Activated CD8-positive, alpha-beta T cell treated with anti-CD3 and anti-CD28 coated beads for 36 hours (primary cell): ENCODE measurements at regions of chr9 and their contacts with region 1.

Region 1: DNA sequence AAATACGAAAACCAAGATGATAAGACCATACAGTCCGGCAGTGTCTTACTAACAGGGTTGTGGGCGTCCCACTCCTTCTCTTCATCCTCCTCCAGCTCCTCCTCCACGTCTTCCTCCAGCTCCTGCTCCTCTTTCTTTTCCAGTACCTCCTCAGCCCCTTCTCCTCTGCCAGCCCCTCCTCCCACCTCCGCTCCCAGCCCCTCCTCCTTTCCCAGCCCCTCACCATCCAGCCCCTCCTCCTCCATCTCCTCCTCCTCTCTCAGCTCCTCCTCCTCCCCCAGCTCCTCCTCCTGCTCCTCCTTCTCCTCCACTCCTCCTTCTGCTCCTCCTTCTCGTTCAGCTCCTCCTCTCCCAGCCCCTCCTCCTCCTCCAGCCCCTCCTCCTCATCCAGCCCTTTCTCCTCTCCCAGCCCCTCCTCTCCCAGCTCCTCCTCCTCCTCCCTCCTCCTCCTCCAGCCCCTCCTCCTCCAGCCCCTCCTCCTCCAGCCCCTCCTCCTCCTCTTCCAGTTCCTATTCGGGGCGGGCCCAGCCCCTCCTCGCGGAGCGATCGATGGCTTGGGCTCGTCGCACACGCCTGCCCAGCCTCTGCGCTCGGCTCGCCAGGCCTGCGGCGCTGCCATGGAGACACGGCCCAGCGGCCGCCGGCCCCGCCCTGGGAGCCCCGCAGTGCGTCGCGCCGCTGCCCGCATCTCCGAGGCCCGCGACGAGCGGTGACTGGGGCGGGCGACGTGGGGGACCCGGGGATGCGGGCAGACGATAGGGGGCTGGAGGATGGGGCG is at the start of gene BRD3OS:
- DNase-seq: peak; percentile 95
- ATAC-seq: peak; percentile 95
- H3K4me3 Mint-ChIP-seq: peak within 1 kb of the TSS; percentile 77
- H3K27ac Mint-ChIP-seq: no peak within 1 kb of the TSS
- H3K4me1 Mint-ChIP-seq: peaks cover 5% of the 10 kb centered on the region
- H3K27me3 Mint-ChIP-seq: no peaks in the 10 kb centered on the region
- CTCF ChIP-seq: no peak
- total RNA-seq, gene BRD3OS: 8.1 to 8.2 TPM

Region 2: DNA sequence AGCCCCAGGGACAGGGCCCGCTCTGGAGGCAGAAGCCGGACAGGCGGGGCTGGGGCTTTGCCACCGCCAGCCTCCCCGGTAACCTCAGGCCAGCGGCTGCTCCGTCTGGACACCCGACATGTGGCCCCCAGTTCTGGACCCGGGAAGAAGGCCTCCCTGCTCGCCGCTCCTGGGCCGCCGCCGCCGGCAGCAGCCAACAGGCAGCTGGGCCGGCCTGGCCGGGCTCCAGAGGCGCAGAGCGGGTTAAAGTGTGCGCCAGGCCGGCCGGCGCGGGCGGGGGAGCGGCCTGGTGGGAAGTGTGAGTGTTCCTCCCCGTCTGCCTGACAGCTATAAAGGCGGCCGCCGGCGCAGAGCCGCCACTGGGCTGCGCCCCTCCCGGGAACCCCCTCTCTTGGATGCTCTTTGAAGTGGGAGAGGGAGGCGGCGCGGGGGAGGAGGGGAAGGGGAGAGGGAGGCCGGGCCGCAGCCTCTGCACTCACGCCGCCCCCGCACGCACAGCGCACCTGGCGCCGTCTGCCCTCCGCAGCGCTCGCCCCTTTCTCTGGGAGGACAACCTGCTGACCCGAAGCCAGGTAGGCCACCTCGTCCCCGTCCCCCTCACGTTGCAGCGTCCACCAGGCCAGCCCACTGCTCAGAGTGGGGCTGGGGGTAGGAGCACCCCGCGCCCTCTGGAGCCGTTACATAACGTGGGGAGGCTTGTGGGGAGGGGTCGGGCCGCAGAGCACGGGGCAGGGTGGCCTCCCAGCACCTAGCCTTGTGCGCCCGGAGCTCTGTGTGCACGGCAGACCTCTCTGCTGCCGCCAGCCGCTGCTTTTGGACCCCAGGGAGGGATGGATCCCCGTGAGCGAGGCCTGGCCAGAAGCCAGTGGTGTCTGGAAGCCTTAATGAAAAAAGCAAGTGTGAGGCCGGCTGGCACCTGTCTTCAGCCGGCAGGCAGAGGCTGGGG is 490.4 kb before region 1 on chr9 and contains the start of gene ADAMTSL2:
- CTCF ChIA-PET with region 1: no interaction called
- POLR2A ChIA-PET with region 1: no interaction called
- intact Hi-C with region 1: no loop called
- DNase-seq: peak; percentile 56
- ATAC-seq: peak; percentile 65
- H3K4me3 Mint-ChIP-seq: no peak within 1 kb of the TSS
- H3K27ac Mint-ChIP-seq: no peak within 1 kb of the TSS
- H3K4me1 Mint-ChIP-seq: peaks cover 14% of the 10 kb centered on the region
- H3K27me3 Mint-ChIP-seq: peaks cover 10% of the 10 kb centered on the region
- CTCF ChIP-seq: no peak
- total RNA-seq, gene ADAMTSL2: 0.11 to 0.25 TPM

Region 3: DNA sequence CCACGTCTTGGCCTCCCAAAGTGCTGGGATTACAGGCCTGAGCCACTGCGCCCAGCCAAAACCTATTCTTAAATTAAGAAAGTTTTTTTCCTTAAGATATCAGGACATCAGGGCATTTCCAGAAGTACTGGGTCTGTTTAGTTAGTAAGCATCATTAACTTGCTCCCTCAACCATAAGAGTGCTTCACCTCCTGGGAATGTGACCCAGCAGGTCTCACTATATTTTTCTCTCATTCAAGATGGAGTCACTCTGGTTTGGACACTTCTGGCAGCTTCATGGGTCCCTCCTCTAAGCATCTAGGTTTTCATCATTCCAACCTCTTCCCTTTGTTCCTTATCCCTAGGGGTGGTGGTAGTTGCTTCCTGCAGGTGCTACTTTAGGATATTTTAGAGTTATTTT is 10.1 kb before region 1 on chr9:
- CTCF ChIA-PET with region 1: no interaction called
- POLR2A ChIA-PET with region 1: no interaction called
- intact Hi-C with region 1: no loop called
- DNase-seq: no peak
- ATAC-seq: no peak
- H3K4me3 Mint-ChIP-seq: no peak overlapping the region
- H3K27ac Mint-ChIP-seq: no peak overlapping the region
- H3K4me1 Mint-ChIP-seq: no peaks in the 10 kb centered on the region
- H3K27me3 Mint-ChIP-seq: no peaks in the 10 kb centered on the region
- CTCF ChIP-seq: no peak

Region 4: DNA sequence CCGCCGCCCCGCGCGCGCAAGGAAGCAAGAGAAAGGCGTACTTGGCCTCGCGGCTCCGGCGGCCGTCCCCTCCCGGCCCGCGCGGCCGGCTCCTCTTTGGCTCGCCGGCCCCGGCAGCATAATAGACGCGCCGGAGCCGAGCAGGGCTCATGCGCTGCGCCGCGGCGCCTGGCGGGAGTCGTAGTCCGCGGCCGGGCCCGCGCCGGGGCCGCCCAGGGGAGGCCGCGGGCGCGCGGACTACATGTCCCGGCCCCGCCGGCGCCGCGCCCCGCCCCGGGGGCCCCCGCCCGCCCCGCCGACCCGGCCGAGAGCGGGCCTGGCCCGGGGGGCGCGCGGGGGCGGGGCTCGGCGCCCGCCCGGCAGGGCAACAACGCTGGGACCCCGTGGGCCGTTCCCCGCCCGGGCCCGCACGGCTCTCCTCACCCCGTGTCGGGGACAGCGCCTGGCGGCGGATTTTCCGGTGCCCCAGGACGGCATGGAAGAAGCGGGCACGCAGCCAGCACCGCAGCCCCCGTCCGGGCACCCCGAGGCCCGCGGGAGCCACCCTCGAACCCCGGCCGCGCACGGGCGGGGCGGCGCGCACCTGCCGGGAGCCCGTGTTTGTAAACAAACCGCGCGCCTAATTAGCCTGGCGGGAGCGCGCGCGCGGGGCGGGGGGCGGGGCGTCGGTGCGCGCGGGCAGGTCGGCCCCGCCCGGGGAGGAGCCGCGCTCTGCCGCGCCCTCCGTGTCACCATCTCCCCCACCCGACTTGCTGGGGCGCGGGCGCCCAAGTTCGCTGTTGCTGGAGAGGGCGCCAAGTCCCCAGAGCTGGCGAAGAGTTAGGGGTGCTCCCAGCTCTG is 43.1 kb after region 1 on chr9 and contains the start of gene BRD3:
- CTCF ChIA-PET with region 1: no interaction called
- POLR2A ChIA-PET with region 1: interaction called, 20 read pairs
- intact Hi-C with region 1: loop called (anchors 5 kb)
- DNase-seq: peak; percentile 85
- ATAC-seq: peak; percentile 85
- H3K4me3 Mint-ChIP-seq: peak within 1 kb of the TSS; percentile 89
- H3K27ac Mint-ChIP-seq: peak within 1 kb of the TSS; percentile 95
- H3K4me1 Mint-ChIP-seq: peaks cover 27% of the 10 kb centered on the region
- H3K27me3 Mint-ChIP-seq: peaks cover 15% of the 10 kb centered on the region
- CTCF ChIP-seq: no peak
- total RNA-seq, gene BRD3: 32.7 to 37.7 TPM

Region 5: GRCh38 chr9:134163353-134164196 is 138.6 kb after region 1 on chr9:
- CTCF ChIA-PET with region 1: no interaction called
- POLR2A ChIA-PET with region 1: no interaction called
- intact Hi-C with region 1: no loop called
- DNase-seq: peak; percentile 77
- ATAC-seq: peak; percentile 8
- H3K4me3 Mint-ChIP-seq: no peak overlapping the region
- H3K27ac Mint-ChIP-seq: no peak overlapping the region
- H3K4me1 Mint-ChIP-seq: peaks cover 16% of the 10 kb centered on the region
- H3K27me3 Mint-ChIP-seq: no peaks in the 10 kb centered on the region
- CTCF ChIP-seq: peak; percentile 65